ENCODE measurements at regions of chrX and their contacts with region 1.

Region 1: DNA sequence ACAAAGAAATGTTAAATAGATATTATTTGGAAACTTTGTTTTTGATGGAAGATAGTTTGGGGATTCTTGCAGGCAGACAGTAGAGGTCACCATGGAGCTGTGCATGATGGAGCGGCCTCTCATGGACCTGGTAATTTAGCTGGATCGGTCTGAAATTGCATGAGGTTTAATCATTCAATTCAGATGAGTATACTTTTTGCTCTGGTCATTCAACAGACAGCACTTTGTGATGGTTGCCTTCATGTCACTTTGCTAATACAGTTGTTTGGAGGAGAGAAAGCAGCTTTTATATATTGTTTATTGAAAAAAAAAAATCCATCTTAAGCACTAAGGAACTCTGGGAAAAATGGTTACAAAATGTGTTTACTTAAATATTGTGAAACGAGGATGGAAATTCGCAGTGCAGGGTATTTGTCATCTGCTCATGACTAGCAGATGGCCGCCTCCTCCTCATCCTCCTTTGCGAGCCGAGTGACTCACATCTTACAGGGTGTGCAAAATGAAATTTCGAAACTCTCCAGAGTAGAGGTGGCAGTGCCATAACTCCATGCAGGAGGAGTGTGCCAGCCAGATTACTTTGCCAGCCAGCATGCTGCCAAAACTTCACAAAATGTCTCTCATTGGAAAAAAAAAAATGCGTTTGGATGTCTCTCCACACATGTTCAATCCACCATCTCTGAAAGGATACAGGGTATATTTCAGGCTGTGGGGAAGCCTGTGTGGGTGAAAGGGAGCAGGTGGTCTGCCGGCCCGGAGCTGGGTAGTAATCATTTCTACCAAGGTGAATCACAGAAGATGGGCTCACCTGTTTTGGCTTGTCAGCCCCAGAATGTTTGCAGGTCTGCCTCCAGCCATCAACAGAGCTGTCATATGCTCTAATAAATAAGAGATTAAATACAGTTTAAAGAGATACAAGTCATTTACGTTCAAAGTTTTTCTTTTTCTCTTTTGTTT is 314.9 kb upstream of the DIPK2B start:
- DNase-seq: peak; percentile 98
- H3K4me3 ChIP-seq: no peak overlapping the region
- H3K27ac ChIP-seq: peak overlapping the region; percentile 93
- H3K4me1 ChIP-seq: peaks cover 33% of the 10 kb centered on the region
- H3K27me3 ChIP-seq: no peaks in the 10 kb centered on the region
- CTCF ChIP-seq: peak; percentile 71 to 84

Region 2: GRCh38 chrX:45557390-45557789 is 41.9 kb after region 1 on chrX:
- CTCF ChIA-PET with region 1: interaction called, 7 read pairs
- dilution Hi-C with region 1: no loop called
- in situ Hi-C with region 1: no loop called
- intact Hi-C with region 1: loop called (anchors 2 kb)
- DNase-seq: peak; percentile 25
- H3K4me3 ChIP-seq: no peak overlapping the region
- H3K27ac ChIP-seq: no peak overlapping the region
- H3K4me1 ChIP-seq: no peaks in the 10 kb centered on the region
- H3K27me3 ChIP-seq: no peaks in the 10 kb centered on the region
- CTCF ChIP-seq: peak in 1 of 2 donors; percentile 49

Region 3: GRCh38 chrX:45621376-45622041 is 106.0 kb after region 1 on chrX:
- CTCF ChIA-PET with region 1: no interaction called
- dilution Hi-C with region 1: no loop called
- in situ Hi-C with region 1: no loop called
- intact Hi-C with region 1: loop called (anchors 1 kb)
- DNase-seq: peak; percentile 96
- H3K4me3 ChIP-seq: no peak overlapping the region
- H3K27ac ChIP-seq: peak overlapping the region; percentile 68
- H3K4me1 ChIP-seq: peaks cover 36% of the 10 kb centered on the region
- H3K27me3 ChIP-seq: no peaks in the 10 kb centered on the region
- CTCF ChIP-seq: no peak

Region 4: DNA sequence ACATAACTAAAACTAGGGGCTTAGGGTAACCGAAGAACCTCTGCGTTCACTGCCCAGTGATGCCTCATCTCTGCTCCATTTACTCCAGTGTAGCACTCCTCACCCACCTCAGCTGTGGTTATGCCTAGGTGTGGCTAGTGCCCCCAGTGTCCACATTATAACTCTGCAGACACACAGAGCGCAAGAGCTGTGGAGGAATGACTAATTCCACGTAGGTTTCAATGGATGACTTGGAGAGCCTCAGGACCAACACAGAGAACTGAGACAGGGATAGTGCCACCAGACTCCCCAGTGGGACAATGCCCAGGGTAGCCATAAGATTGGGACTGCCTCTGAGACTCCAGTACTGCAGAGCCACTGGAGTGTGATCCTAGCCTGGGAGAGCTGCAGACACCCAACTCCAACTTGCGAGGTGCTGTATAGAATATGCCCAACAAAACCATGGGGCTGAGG is 227.6 kb after region 1 on chrX:
- CTCF ChIA-PET with region 1: interaction called, 11 read pairs
- dilution Hi-C with region 1: no loop called
- in situ Hi-C with region 1: no loop called
- intact Hi-C with region 1: loop called (anchors 1 kb)
- DNase-seq: peak; percentile 78
- H3K4me3 ChIP-seq: no peak overlapping the region
- H3K27ac ChIP-seq: peak overlapping the region; percentile 13
- H3K4me1 ChIP-seq: peaks cover 66% of the 10 kb centered on the region
- H3K27me3 ChIP-seq: no peaks in the 10 kb centered on the region
- CTCF ChIP-seq: peak; percentile 47 to 56

Region 5: DNA sequence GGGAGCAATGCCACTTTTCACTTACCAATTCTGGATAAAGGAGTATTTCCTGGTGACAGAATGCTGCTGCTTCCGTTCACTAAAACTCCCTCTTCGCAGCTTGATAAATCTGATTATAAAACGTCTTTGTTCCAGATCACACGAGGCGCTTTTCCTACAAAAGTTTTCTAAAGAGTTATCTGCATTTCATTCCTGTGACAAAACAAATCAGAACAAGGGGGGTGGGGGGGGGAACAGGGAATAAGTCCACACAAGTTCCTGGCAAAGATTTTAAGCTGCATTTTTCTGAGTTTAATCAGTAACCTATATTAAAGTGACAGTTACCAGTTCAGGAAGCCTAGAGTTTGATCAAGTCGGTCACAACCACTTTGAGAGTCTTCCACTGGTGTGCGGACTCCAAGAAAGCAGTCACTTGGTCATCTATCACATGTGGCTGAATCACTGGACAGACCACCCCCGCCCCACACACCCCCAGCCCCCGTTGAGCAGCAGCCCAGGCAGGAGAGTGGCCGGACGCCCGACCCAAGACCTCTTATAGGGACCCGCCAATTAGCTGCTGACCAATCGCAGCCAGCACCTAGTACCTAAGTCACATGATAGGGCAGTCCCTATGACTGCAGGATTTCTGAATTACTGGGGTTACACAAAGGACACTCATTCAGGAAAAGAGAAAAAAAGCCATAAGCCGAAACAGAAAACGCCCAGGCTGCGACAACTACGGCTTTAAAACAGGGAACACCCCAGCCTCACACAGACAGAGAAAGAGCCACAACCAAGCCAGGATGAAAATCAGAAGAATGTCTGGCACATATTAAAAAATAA is 254.4 kb after region 1 on chrX:
- CTCF ChIA-PET with region 1: interaction called, 11 read pairs
- dilution Hi-C with region 1: no loop called
- in situ Hi-C with region 1: no loop called
- intact Hi-C with region 1: loop called (anchors 1 kb)
- DNase-seq: peak; percentile 86
- H3K4me3 ChIP-seq: peak overlapping the region; percentile 59 to 98 (median 91)
- H3K27ac ChIP-seq: peak overlapping the region; percentile 98
- H3K4me1 ChIP-seq: peaks cover 41% of the 10 kb centered on the region
- H3K27me3 ChIP-seq: no peaks in the 10 kb centered on the region
- CTCF ChIP-seq: no peak

Region 6: DNA sequence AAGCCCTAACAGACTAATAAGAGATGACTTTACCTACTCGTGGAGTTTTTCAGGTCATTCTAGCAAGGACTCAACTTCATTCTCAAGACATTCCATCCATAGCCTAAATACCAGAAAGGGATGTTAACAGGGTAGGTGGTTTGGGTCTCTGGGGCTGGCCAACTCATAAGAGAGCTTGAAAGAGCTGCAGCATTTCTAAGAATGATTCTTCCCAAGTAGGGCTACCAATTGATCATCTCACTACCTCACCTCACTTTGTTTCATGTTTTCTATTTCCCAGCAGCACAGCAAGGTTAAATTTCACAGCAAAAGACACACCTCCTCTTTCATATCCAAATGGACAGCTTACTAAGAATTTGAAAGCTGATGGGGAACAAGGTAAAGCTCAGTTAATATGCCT is 299.9 kb after region 1 on chrX:
- CTCF ChIA-PET with region 1: no interaction called
- dilution Hi-C with region 1: no loop called
- in situ Hi-C with region 1: no loop called
- intact Hi-C with region 1: no loop called
- DNase-seq: no peak
- H3K4me3 ChIP-seq: no peak overlapping the region
- H3K27ac ChIP-seq: no peak overlapping the region
- H3K4me1 ChIP-seq: peaks cover 4% of the 10 kb centered on the region
- H3K27me3 ChIP-seq: peaks cover 2% of the 10 kb centered on the region
- CTCF ChIP-seq: no peak

Region 7: DNA sequence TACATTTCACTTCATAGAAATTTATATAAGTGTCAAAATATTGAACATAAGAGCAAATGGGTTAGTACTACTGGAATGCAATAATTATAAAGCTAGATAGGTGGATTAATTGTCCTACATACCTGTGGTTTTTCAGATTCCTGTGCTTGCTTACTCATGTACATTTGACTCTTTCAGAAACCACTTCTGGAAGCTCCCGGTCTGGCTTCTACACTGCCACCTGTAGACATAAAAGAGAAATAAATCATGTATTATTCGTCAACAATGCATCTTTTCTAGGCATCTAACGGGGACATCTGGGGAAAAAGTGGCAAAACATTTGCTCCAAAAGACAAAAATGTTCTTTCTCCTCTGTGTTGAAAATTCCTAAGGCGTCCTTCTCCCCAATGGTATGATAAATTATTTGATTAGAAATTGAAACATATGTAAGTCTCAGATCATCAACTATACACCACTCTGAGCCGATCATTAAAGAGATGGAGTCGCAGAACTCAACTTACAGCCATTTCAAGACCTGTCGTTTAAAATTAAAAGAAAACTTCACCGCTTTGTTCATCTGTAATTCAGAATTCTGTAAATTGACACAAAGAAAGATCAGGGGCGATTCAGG is 333.8 kb after region 1 on chrX:
- CTCF ChIA-PET with region 1: no interaction called
- dilution Hi-C with region 1: no loop called
- in situ Hi-C with region 1: no loop called
- intact Hi-C with region 1: loop called (anchors 1 kb)
- DNase-seq: peak; percentile 84
- H3K4me3 ChIP-seq: peak overlapping the region; percentile 34 to 78 (median 77)
- H3K27ac ChIP-seq: peak overlapping the region; percentile 56
- H3K4me1 ChIP-seq: peaks cover 32% of the 10 kb centered on the region
- H3K27me3 ChIP-seq: no peaks in the 10 kb centered on the region
- CTCF ChIP-seq: peak; percentile 36 to 61

Region 8: GRCh38 chrX:46408553-46409407 is 893.2 kb after region 1 on chrX:
- CTCF ChIA-PET with region 1: no interaction called
- dilution Hi-C with region 1: no loop called
- in situ Hi-C with region 1: no loop called
- intact Hi-C with region 1: loop called (anchors 1 kb)
- DNase-seq: peak; percentile 39
- H3K4me3 ChIP-seq: no peak overlapping the region
- H3K27ac ChIP-seq: no peak overlapping the region
- H3K4me1 ChIP-seq: peaks cover 5% of the 10 kb centered on the region
- H3K27me3 ChIP-seq: no peaks in the 10 kb centered on the region
- CTCF ChIP-seq: peak; percentile 88 to 92

Measured in mammary epithelial cell (primary cell).